Pancreas (tissue), 10 donors: ENCODE measurements at regions of chr17 and their contacts with region 1.

Region 1: GRCh38 chr17:40909351-40909750 is 24.3 kb upstream of the KRT20 start:
- DNase-seq: peak; percentile 58 to 84 (median 65)
- ATAC-seq: peak; percentile 88 to 99 (median 99)
- H3K4me3 ChIP-seq: no peak overlapping the region
- H3K27ac ChIP-seq: peak overlapping the region in 1 of 4 donors; percentile 12
- H3K4me1 ChIP-seq: no peaks in the 10 kb centered on the region
- H3K27me3 ChIP-seq: peaks cover 0 to 6% (median 0%) of the 10 kb centered on the region in 4 donors
- CTCF ChIP-seq: peak; percentile 11 to 64 (median 57)

Region 2: DNA sequence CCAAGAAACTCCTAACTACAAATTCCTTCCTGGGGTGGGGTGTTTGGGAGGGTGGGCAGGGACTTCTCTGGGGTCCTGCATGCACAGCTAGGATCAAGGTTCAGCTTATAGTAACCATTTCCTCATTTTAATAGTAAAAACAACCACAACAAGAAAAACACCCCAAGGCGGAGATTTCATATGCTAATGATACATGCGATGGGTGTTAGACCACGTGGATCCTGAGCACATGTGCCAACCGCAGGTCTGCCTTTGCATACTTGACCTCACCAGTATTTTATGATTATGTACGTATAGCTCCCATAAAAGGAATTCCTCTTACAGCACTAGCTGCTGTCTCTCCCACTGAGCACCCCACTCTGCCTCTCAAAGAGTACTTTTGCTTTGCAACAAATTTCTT is 206.9 kb after region 1 on chr17:
- intact Hi-C with region 1: no loop called
- DNase-seq: no peak
- ATAC-seq: no peak
- H3K4me3 ChIP-seq: no peak overlapping the region
- H3K27ac ChIP-seq: no peak overlapping the region
- H3K4me1 ChIP-seq: no peaks in the 10 kb centered on the region
- H3K27me3 ChIP-seq: no peaks in the 10 kb centered on the region
- CTCF ChIP-seq: no peak

Region 3: DNA sequence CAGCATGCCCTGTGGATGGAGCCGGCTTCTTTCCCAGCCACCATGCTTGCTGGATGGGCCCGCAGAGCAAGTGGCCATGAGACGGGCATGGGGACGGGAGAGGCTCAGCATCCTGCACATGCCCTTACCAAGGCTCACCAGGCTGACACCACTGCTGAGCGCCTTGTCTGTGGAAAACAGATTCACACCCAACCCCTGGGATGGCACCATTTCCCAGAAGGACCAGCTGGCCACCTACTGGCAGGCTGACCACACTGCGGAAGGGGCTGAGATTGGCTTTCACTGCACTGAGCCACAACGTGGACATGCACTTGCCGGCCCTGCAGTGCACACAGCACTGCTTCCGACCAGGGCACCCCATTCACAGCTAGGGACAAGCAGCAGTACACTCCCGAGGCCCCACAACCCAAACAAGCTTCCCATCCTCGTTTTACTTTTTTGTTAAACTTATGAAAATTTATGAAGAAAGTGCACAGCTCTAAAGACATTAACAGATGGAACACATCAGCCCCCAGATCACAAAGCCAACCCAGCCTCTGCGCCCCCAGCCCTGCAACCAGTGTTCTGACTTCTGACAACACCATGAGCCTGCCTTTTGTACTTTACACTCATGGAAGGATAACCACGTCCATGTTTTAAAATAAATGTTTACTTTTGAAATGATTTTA is 420.1 kb after region 1 on chr17:
- intact Hi-C with region 1: loop called in 1 of 3 experiments (anchors 5 kb)
- DNase-seq: peak in 2 of 6 donors; percentile 32 to 43
- ATAC-seq: peak in 3 of 4 donors; percentile 67 to 77 (median 72)
- H3K4me3 ChIP-seq: no peak overlapping the region
- H3K27ac ChIP-seq: no peak overlapping the region
- H3K4me1 ChIP-seq: no peaks in the 10 kb centered on the region
- H3K27me3 ChIP-seq: no peaks in the 10 kb centered on the region
- CTCF ChIP-seq: peak in 3 of 4 donors; percentile 24 to 35 (median 26)

Region 4: GRCh38 chr17:41521574-41522261 is 612.4 kb after region 1 on chr17:
- intact Hi-C with region 1: loop called in 1 of 3 experiments (anchors 10 kb)
- DNase-seq: peak in 4 of 6 donors; percentile 23 to 52 (median 40)
- ATAC-seq: peak; percentile 28 to 70 (median 52)
- H3K4me3 ChIP-seq: no peak overlapping the region
- H3K27ac ChIP-seq: peak overlapping the region; percentile 30 to 63 (median 43)
- H3K4me1 ChIP-seq: peaks cover 0 to 6% (median 4%) of the 10 kb centered on the region in 3 donors
- H3K27me3 ChIP-seq: no peaks in the 10 kb centered on the region
- CTCF ChIP-seq: no peak

Region 5: GRCh38 chr17:41655611-41656351 is 746.4 kb after region 1 on chr17:
- intact Hi-C with region 1: loop called in 2 of 3 experiments (anchors 10 kb)
- DNase-seq: peak in 5 of 6 donors; percentile 39 to 86 (median 47)
- ATAC-seq: peak; percentile 24 to 61 (median 46)
- H3K4me3 ChIP-seq: no peak overlapping the region
- H3K27ac ChIP-seq: peak overlapping the region; percentile 50 to 69 (median 56)
- H3K4me1 ChIP-seq: no peaks in the 10 kb centered on the region
- H3K27me3 ChIP-seq: no peaks in the 10 kb centered on the region
- CTCF ChIP-seq: no peak

Region 6: GRCh38 chr17:41665566-41666236 is 756.4 kb after region 1 on chr17:
- intact Hi-C with region 1: loop called in 1 of 3 experiments (anchors 10 kb)
- DNase-seq: peak; percentile 89 to 98 (median 92)
- ATAC-seq: peak; percentile 87 to 93 (median 90)
- H3K4me3 ChIP-seq: peak overlapping the region; percentile 5 to 49 (median 28)
- H3K27ac ChIP-seq: peak overlapping the region; percentile 67 to 92 (median 82)
- H3K4me1 ChIP-seq: peaks cover 0 to 6% (median 0%) of the 10 kb centered on the region in 3 donors
- H3K27me3 ChIP-seq: no peaks in the 10 kb centered on the region
- CTCF ChIP-seq: peak; percentile 89 to 95 (median 92)